BJ (cell line): ENCODE measurements at regions of chr17 and their contacts with region 1.

Region 1: GRCh38 chr17:33725675-33726271 is 432.7 kb upstream of the ASIC2 start:
- DNase-seq: no peak
- H3K4me3 ChIP-seq: no peak overlapping the region
- H3K27me3 ChIP-seq: no peaks in the 10 kb centered on the region
- CTCF ChIP-seq: peak; percentile 83

Region 2: GRCh38 chr17:33745047-33745760 is 19.4 kb after region 1 on chr17:
- CTCF ChIA-PET with region 1: interaction called, 65 read pairs
- POLR2A ChIA-PET with region 1: no interaction called
- DNase-seq: no peak
- H3K4me3 ChIP-seq: no peak overlapping the region
- H3K27me3 ChIP-seq: no peaks in the 10 kb centered on the region
- CTCF ChIP-seq: no peak

Region 3: GRCh38 chr17:33750943-33751701 is 25.3 kb after region 1 on chr17:
- CTCF ChIA-PET with region 1: interaction called, 65 read pairs
- POLR2A ChIA-PET with region 1: no interaction called
- DNase-seq: peak; percentile 5
- H3K4me3 ChIP-seq: no peak overlapping the region
- H3K27me3 ChIP-seq: no peaks in the 10 kb centered on the region
- CTCF ChIP-seq: peak; percentile 91